Activated CD4-positive, alpha-beta T cell treated with anti-CD3 and anti-CD28 coated beads for 36 hours (primary cell): ENCODE measurements at regions of chr19 and their contacts with region 1.

Region 1: GRCh38 chr19:57613941-57614743 is at the start of gene ZNF134:
- DNase-seq: peak; percentile 94
- ATAC-seq: peak; percentile 99
- H3K4me3 Mint-ChIP-seq: peak within 1 kb of the TSS; percentile 89
- H3K27ac Mint-ChIP-seq: peak within 1 kb of the TSS; percentile 79
- H3K4me1 Mint-ChIP-seq: peaks cover 19% of the 10 kb centered on the region
- H3K27me3 Mint-ChIP-seq: no peaks in the 10 kb centered on the region
- total RNA-seq, gene ZNF134: 7.6 to 9.7 TPM

Region 2: DNA sequence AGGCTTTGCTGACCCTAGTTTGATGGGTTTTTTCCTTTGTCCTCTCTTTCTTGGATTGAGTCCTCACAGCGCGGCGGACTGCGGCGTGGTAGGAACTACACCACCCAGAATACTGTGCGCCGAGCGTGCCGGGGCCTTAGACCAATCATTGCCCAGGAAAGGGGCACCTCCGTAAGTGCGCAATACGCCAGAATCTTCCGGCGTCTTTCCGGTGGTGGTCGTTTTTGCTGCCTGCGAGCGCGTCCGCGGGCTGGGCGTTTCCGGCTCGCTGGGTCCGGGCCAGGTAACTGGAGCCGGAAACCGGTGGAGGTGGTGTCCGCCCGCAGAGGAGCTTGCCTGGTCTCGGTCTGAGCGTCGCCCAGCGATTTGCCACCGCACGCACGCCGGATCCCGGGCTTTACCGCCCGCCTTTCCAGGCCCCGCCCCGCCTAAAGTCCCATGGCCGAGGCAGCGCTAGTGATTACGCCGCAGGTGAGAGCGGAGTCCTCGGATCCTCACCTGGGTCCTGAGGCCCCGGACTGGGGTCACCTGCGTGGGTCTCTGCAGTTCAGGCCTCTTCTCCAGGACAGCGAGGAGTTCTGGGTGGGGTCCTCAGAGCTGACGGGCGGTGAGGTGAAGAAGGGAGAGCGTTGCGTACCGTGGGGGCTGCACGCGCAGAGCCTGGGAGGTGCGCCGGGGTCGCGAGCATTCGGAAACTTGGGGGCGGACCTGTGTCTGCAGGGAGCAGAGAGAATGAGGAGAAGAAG is 86.8 kb before region 1 on chr19 and contains the start of gene ZNF549:
- CTCF ChIA-PET with region 1: no interaction called
- POLR2A ChIA-PET with region 1: no interaction called
- intact Hi-C with region 1: loop called in 1 of 2 experiments (anchors 1 kb)
- DNase-seq: peak; percentile 93
- ATAC-seq: peak; percentile 100
- H3K4me3 Mint-ChIP-seq: peak within 1 kb of the TSS; percentile 82
- H3K27ac Mint-ChIP-seq: peak within 1 kb of the TSS; percentile 84
- H3K4me1 Mint-ChIP-seq: peaks cover 18% of the 10 kb centered on the region
- H3K27me3 Mint-ChIP-seq: no peaks in the 10 kb centered on the region
- total RNA-seq, gene ZNF549: 3.7 to 4.6 TPM

Region 3: GRCh38 chr19:57599761-57600383 is 14.3 kb before region 1 on chr19 and contains the start of gene ZNF530:
- CTCF ChIA-PET with region 1: interaction called, 3 read pairs
- POLR2A ChIA-PET with region 1: no interaction called
- intact Hi-C with region 1: loop called (anchors 1 kb)
- DNase-seq: peak; percentile 95
- ATAC-seq: peak; percentile 98
- H3K4me3 Mint-ChIP-seq: peak within 1 kb of the TSS; percentile 81
- H3K27ac Mint-ChIP-seq: peak within 1 kb of the TSS; percentile 79
- H3K4me1 Mint-ChIP-seq: peaks cover 12% of the 10 kb centered on the region
- H3K27me3 Mint-ChIP-seq: no peaks in the 10 kb centered on the region
- total RNA-seq, gene ZNF530: 7.1 to 7.2 TPM

Region 4: GRCh38 chr19:57682226-57682766 is 68.2 kb after region 1 on chr19:
- CTCF ChIA-PET with region 1: no interaction called
- POLR2A ChIA-PET with region 1: no interaction called
- intact Hi-C with region 1: loop called in 1 of 2 experiments (anchors 1 kb)
- DNase-seq: no peak
- ATAC-seq: no peak
- H3K4me3 Mint-ChIP-seq: peak overlapping the region; percentile 85
- H3K27ac Mint-ChIP-seq: peak overlapping the region; percentile 93
- H3K4me1 Mint-ChIP-seq: peaks cover 31% of the 10 kb centered on the region
- H3K27me3 Mint-ChIP-seq: peaks cover under 1% of the 10 kb centered on the region

Region 5: DNA sequence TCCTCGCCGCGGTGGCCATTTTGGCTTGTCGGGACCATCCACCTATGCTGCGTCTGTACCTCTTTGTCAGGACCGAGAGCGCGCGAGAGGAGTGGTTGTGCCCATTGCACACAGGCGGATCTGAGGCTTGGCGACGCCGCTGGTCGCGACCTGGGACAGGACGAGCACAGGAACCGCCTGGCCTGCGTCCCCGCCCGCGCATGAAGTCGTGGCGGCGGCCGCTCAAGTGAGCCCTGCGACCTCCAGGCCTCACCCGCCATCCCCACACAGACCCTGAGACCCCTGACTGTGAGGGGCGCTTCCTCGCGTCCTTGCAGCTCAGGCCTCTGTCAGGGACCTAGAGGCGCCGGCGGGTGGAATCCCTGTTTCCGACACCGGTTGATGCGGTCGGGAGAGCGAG is 172.1 kb after region 1 on chr19:
- CTCF ChIA-PET with region 1: no interaction called
- POLR2A ChIA-PET with region 1: no interaction called
- intact Hi-C with region 1: no loop called
- DNase-seq: no peak
- ATAC-seq: no peak
- H3K4me3 Mint-ChIP-seq: no peak overlapping the region
- H3K27ac Mint-ChIP-seq: no peak overlapping the region
- H3K4me1 Mint-ChIP-seq: peaks cover 2% of the 10 kb centered on the region
- H3K27me3 Mint-ChIP-seq: no peaks in the 10 kb centered on the region

Region 6: DNA sequence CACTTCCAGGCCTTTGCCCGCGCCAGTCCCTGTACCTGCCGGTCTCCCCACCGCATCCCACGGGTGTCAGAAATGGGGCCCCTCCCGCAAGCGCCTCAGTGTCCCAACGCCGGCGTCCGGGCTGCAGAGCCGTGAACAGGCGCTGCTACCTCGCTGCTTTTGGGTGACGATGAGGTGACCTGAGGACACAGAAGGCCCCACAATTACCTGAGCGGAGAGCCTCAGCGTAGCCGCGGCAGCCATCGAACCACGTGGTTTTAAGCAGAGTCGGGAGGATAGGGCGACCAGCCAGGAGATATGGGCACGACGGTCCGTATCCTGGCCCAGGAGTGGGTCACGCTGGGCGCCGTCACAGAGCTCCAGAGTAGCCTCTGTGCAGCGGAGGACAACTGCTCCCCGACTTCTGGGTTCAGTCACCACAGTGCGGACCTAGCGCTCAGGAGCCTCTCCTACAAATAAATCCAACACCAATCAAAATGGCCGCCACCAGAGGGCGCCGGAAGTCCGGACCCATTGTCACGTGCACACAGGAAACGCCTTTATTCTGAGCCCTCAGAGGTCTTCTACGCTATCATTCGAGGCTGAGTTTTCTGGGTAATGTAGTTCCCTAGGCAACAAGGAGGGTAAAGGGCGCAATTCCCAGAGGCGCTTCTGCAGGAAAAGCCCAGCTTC is 274.6 kb after region 1 on chr19 and contains the start of gene ZNF814:
- CTCF ChIA-PET with region 1: no interaction called
- POLR2A ChIA-PET with region 1: no interaction called
- intact Hi-C with region 1: loop called in 1 of 2 experiments (anchors 1 kb)
- DNase-seq: peak; percentile 91
- ATAC-seq: peak; percentile 94
- H3K4me3 Mint-ChIP-seq: peak within 1 kb of the TSS; percentile 96
- H3K27ac Mint-ChIP-seq: peak within 1 kb of the TSS; percentile 92
- H3K4me1 Mint-ChIP-seq: peaks cover 23% of the 10 kb centered on the region
- H3K27me3 Mint-ChIP-seq: no peaks in the 10 kb centered on the region
- total RNA-seq, gene ZNF814: 24.1 to 24.5 TPM